ENCODE measurements at regions of chr15 and their contacts with region 1.

Region 1: DNA sequence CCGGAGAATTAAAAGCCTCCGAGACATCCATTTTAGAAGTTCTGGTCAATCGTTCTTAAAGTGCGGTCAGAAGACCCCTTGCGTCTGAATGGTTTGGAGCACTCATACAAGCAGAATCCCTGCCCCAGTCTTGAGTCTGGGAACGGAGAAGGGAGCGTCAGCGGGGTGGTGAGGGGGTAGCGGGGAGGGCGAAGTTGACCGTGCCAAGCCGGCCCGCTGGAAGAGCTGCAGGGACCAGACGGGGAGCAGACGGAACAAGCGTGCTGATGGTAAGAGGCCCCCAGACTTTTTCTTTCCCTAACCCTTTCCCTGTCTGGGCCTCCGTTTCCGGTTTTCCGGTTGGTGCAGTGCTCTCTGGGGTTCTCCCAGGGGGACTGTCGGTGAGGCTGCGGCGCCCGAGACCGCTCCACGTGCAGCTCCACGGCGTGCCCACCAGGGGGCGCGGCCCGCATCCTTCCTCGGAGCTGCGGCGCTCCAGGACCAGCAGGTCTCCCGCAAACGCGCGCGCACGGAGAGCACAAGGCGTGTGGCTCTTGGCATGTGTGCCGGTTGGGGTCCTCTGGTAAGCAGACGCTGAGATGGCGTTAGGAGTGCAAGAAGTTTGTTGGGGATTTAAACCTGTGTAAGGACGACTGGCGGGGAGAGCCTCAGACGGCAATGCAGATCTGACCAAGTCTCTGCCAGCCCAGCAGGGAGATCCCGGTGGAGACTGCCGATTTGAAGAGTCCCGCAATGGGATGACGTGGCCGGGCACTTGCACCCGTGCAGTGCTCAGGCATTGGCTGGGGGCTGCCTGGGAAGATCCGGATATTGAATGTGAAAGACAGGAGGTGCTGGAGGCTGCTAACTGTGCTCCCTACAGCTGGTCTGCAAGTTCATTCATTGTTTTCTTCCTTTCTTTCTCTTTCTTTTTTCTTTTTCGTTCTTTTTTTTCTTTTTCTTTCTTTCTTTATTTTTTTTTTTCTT is 19.2 kb upstream of the CORO2B start:
- DNase-seq: peak; percentile 80 to 91 (median 85)
- H3K4me3 ChIP-seq: peak overlapping the region; percentile 43
- H3K27ac ChIP-seq: peak overlapping the region in 1 of 2 donors; percentile 36
- H3K4me1 ChIP-seq: peaks cover 7% of the 10 kb centered on the region
- H3K27me3 ChIP-seq: no peaks in the 10 kb centered on the region
- CTCF ChIP-seq: peak; percentile 93 to 97 (median 97)
- EP300 ChIP-seq: no peak
- POLR2A ChIP-seq: no peak

Region 2: DNA sequence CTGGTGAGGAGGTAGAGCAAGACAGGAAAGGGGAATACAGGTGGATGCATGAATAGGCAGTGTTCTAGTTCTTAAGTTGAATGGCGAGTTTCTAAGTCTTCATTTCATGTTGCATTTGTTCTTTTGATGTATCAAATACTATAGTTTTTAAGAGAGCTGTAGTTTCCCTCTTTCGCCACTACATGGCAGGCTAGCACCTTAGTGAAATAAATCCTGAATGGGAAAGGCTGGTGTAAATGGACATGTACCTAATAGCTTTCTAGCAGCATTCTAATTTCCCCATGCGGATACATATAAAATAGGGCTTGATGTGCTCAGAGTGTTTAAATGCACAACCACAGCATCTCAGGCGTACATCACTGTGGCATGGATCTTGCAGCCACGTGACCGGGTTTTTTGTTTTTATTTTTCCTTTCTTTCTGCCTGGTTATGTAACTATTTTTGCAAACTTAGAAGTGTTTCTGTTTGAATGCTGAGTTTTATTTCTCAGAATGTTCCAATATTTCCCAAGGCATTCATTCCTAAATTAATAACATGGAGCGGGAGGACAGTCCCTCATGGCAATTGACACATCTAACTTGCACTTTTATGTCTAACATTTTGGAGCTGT is 306.6 kb before region 1 on chr15:
- intact Hi-C with region 1: loop called in 1 of 4 experiments (anchors 10 kb)
- DNase-seq: peak in 2 of 5 donors; percentile 31 to 57
- H3K4me3 ChIP-seq: no peak overlapping the region
- H3K27ac ChIP-seq: no peak overlapping the region
- H3K4me1 ChIP-seq: peaks cover 4% of the 10 kb centered on the region
- H3K27me3 ChIP-seq: no peaks in the 10 kb centered on the region
- CTCF ChIP-seq: peak; percentile 86 to 91 (median 87)
- EP300 ChIP-seq: no peak
- POLR2A ChIP-seq: no peak

Region 3: DNA sequence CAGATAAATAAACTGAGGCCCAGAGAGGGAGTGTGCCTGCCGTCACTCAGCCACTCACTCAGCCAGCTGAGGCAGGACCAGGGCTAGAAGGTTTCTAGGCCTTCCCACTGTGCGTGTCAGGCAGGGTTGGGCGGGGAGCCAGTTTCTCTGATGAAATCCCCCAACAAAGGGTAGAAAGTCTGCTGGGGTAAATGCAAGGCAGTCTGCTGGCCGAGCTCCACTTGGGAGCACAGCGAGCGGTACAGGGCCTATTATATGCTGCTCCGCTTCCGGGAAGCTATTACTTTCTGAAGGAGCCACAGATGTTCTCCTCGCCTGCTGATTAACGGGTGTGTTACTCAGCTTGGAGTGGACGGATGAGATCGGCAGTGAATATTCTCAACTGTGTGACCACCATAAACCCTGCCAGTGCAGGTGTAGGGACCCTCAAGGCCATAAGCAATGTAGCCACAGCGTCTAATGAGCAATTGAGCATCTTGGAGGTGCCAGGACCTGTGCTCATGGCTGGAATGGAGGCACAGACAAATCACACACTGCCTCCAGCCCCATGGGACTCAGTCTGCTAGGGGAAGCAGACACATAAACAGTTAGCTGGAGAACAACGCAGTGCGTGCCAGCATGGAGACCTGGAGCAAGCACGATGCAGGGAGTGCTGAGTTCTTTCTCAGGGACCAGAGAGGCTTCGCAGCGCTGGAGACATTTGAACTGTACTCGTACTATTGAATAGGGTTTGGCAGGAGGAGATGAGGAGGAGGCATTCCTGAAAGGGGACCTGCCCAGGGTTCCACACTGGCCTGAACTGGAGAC is 61.3 kb after region 1 on chr15:
- intact Hi-C with region 1: no loop called
- DNase-seq: peak; percentile 88 to 97 (median 96)
- H3K4me3 ChIP-seq: no peak overlapping the region
- H3K27ac ChIP-seq: peak overlapping the region in 1 of 2 donors; percentile 55
- H3K4me1 ChIP-seq: peaks cover 32% of the 10 kb centered on the region
- H3K27me3 ChIP-seq: no peaks in the 10 kb centered on the region
- CTCF ChIP-seq: no peak
- EP300 ChIP-seq: no peak
- POLR2A ChIP-seq: peak; percentile 50

Region 4: GRCh38 chr15:68672781-68673205 is 113.2 kb after region 1 on chr15:
- intact Hi-C with region 1: loop called (anchors 5 kb)
- DNase-seq: peak in 4 of 5 donors; percentile 27 to 41 (median 32)
- H3K4me3 ChIP-seq: no peak overlapping the region
- H3K27ac ChIP-seq: no peak overlapping the region
- H3K4me1 ChIP-seq: peaks cover 21% of the 10 kb centered on the region
- H3K27me3 ChIP-seq: no peaks in the 10 kb centered on the region
- CTCF ChIP-seq: peak in 2 of 3 donors; percentile 19 to 21
- EP300 ChIP-seq: no peak
- POLR2A ChIP-seq: no peak

Region 5: DNA sequence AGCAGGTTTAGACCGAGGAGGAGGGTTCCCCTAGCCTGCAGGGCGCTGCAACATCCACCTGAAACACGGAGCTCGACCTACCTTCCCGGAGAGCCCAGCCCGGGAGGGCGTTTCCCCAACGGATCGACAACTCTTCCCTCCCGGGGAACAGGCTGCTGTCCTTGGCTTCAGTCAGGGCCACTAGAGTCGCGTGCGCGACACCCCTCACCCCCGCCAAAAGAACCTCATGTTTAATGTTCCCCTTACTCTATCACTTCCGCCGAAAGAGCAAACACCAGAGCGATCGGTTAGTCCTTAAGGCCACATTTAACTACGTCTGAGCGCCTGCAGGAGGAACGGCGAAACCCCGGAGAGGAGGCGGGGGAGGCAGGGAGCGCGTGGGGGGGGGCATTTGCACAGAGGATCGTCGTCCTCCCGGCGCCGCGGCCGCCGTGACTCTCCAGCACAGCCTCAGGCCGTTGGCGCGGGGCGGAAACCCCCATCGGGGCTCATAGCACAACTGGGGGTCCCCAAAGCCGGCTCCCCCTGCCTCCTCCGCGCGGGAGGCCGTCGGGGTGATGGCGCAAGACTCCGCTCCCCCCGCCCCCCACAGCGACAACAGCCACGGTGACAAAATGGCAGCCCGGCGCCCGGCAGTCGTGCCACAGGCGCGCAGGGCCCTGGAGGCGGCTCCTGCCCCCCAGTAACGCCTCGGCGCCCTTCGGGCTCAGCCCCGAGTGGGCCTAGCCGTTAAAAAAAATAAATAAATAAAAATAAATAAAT is 257.9 kb after region 1 on chr15:
- intact Hi-C with region 1: loop called in 1 of 4 experiments (anchors 10 kb)
- DNase-seq: peak; percentile 53 to 74 (median 68)
- H3K4me3 ChIP-seq: peak overlapping the region; percentile 89
- H3K27ac ChIP-seq: peak overlapping the region; percentile 95 to 98
- H3K4me1 ChIP-seq: peaks cover 6% of the 10 kb centered on the region
- H3K27me3 ChIP-seq: no peaks in the 10 kb centered on the region
- CTCF ChIP-seq: no peak
- EP300 ChIP-seq: no peak
- POLR2A ChIP-seq: no peak

Region 6: DNA sequence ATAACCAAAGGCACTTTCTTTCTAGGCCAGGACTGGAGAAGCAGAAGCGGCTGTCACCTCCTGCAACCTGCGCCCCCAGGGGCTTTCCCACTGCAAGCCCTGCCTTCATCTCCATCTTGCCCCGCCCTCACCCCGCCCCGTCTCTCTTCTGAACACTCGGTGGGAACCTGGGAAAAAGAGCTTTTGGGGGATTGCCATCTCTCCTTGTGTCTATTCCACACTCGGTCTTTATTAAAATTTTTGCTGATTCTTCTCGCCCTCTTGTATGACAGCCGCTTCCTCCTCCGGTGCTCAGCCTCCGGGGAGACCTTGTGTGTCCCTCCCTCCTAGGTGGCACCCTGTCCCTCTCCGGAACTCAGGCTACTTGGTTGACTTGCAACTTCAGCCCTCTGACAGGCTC is 328.8 kb after region 1 on chr15:
- intact Hi-C with region 1: no loop called
- DNase-seq: no peak
- H3K4me3 ChIP-seq: no peak overlapping the region
- H3K27ac ChIP-seq: no peak overlapping the region
- H3K4me1 ChIP-seq: no peaks in the 10 kb centered on the region
- H3K27me3 ChIP-seq: no peaks in the 10 kb centered on the region
- CTCF ChIP-seq: no peak
- EP300 ChIP-seq: no peak
- POLR2A ChIP-seq: no peak

Measured in ovary (tissue), 10 donors.